Activated CD8-positive, alpha-beta T cell treated with anti-CD3 and anti-CD28 coated beads, Interleukin-2, amount 10 ng/mL, durations not matched to agents 7 days and 5 days (primary cell): ENCODE measurements at regions of chr17 and their contacts with region 1.

Region 1: DNA sequence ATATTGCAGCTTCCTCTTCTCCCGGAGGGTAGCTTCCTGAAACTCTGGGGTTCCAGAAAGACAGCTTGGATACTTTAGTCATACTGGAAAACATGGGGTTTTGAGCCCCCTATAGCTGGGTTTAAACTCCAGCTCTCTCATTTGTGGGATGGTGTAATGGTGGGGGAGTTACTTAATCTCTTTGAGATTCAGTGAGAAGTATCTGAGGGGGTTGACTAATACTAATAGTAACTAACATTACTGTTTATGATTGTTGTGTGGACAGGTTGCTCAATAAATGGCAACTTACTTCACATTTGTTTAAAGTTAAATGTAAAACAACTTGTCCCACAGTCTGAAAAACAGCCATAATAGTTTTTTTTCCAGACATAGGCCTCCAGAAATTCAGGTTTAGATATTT is 5.1 kb upstream of the SUZ12 start:
- DNase-seq: no peak
- ATAC-seq: no peak
- H3K4me3 Mint-ChIP-seq: no peak overlapping the region
- H3K27ac Mint-ChIP-seq: no peak overlapping the region
- H3K4me1 Mint-ChIP-seq: peaks cover 6% of the 10 kb centered on the region
- H3K27me3 Mint-ChIP-seq: no peaks in the 10 kb centered on the region

Region 2: DNA sequence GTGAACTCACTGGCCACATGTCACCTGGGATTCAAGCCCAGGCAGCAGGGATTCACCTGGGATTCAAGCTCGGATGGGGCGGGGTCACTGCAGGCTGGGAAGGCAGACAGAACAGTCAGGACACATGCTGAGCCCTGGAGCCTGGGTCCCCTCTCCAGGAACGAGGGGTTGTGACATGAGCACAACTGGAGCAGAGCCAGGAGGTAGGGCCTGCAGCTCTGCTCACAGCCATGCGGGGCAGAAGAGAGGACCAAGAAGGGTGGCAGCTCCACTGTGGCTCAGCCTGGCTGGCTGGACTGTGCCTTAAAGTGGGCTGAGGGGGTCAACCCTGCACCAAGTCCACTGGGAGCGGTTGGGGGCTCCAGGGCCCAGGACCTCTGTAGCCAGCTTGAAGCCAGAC is 390.2 kb before region 1 on chr17:
- CTCF ChIA-PET with region 1: no interaction called
- POLR2A ChIA-PET with region 1: no interaction called
- DNase-seq: no peak
- ATAC-seq: no peak
- H3K4me3 Mint-ChIP-seq: no peak overlapping the region
- H3K27ac Mint-ChIP-seq: no peak overlapping the region
- H3K4me1 Mint-ChIP-seq: peaks cover 2% of the 10 kb centered on the region
- H3K27me3 Mint-ChIP-seq: no peaks in the 10 kb centered on the region

Region 3: GRCh38 chr17:31825961-31826691 is 105.6 kb before region 1 on chr17:
- CTCF ChIA-PET with region 1: no interaction called
- POLR2A ChIA-PET with region 1: no interaction called
- DNase-seq: no peak
- ATAC-seq: no peak
- H3K4me3 Mint-ChIP-seq: no peak overlapping the region
- H3K27ac Mint-ChIP-seq: no peak overlapping the region
- H3K4me1 Mint-ChIP-seq: no peaks in the 10 kb centered on the region
- H3K27me3 Mint-ChIP-seq: peaks cover 12% of the 10 kb centered on the region

Region 4: DNA sequence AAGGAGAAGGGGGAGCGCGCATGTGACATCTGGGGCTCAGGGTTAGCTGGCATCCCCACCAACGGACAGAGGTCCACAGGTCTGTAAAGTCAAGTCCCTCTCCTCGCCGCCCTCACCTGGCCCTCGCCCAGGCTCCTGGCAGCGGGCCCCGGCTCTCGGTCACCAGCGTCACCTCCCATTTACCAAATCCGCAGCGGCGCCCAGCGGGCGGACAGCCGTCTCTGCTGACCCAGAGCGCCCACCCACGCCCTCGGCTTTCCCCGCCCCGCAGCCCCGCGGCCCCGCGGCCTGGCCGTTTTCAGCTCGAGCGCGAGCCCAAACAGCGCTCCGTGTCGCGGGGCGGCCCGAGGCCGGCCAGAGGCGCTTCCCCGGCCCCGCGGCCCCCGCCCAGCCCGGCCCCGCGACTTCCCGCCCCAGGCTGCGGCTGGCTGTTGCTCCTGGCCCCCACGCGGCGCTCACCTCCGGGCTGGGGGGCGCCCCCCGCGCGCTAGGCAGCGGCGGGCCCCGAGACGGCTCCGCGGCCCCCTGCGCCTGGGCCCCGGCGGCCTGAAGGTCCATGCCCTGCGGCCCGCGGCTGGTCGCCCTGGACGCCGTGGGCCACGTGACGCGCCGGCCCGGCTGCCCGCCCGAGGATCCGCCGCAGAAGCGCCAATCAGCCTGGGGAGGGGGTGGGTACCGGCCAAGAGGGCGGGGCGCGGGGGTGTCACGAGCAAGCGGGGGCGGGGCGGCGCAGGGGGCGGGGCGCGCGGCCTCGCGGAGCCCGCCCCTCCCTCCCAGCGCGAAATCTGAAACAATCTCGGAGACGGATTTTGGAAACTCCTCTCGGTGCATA is 72.9 kb before region 1 on chr17 and contains the start of gene COPRS:
- CTCF ChIA-PET with region 1: no interaction called
- POLR2A ChIA-PET with region 1: no interaction called
- DNase-seq: peak; percentile 85
- ATAC-seq: peak; percentile 92
- H3K4me3 Mint-ChIP-seq: peak within 1 kb of the TSS; percentile 85
- H3K27ac Mint-ChIP-seq: peak within 1 kb of the TSS; percentile 83
- H3K4me1 Mint-ChIP-seq: peaks cover 20% of the 10 kb centered on the region
- H3K27me3 Mint-ChIP-seq: no peaks in the 10 kb centered on the region
- total RNA-seq, gene COPRS: 21.0 to 22.5 TPM

Region 5: DNA sequence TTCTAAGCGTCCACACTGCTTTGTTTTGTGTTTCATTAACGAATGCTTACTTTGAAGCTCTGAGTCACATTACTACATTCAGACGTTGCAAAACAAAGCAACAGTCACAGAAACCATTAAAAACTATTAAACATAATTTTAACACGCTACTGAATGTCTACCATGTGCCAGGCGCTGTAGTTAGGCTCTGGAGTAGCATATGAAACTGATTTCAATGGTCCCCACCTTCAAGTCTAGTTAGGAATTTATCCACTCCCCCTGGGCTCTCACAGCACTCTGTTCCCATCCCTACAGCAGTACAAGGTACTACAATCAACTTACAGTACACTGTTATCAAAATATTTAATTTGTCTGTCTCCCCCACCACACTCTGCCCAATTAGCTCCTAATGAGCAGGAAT is 30.9 kb before region 1 on chr17:
- CTCF ChIA-PET with region 1: interaction called, 9 read pairs
- POLR2A ChIA-PET with region 1: interaction called, 13 read pairs
- DNase-seq: no peak
- ATAC-seq: peak; percentile 4
- H3K4me3 Mint-ChIP-seq: no peak overlapping the region
- H3K27ac Mint-ChIP-seq: no peak overlapping the region
- H3K4me1 Mint-ChIP-seq: peaks cover 18% of the 10 kb centered on the region
- H3K27me3 Mint-ChIP-seq: no peaks in the 10 kb centered on the region